ENCODE measurements at regions of chr2 and their contacts with region 1.

Region 1: DNA sequence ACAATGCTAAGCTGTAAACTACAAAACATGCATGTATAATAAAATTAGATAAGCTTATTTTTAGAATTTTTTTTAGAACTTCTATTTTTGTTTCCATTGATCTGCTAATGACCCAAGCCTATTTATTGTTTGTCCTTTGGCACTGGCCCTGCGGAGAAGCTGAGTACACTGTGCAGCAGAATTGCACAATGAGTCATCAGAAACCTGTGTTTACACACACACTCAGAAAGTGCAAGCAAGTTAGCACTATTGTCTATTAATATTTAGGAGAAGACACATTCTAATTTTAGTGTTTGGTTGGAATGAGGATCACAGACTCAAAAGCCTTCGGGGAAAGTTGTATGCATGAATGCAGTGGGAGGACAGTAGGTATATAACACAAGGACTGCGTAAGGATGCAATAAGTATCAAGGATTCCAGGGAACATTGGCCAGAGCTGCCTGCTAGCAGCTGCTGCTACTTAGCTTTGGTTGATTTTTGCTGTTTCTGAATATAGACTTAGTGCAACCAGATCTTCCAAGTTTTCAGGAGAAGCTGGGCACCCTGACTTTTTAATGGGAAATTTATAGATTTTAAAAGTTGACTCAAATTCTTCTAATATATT is 128.2 kb downstream of the KCNH7 start:
- DNase-seq: no peak
- H3K4me3 ChIP-seq: no peak overlapping the region
- H3K27ac ChIP-seq: no peak overlapping the region
- H3K4me1 ChIP-seq: no peaks in the 10 kb centered on the region
- H3K27me3 ChIP-seq: no peaks in the 10 kb centered on the region
- CTCF ChIP-seq: no peak

Region 2: DNA sequence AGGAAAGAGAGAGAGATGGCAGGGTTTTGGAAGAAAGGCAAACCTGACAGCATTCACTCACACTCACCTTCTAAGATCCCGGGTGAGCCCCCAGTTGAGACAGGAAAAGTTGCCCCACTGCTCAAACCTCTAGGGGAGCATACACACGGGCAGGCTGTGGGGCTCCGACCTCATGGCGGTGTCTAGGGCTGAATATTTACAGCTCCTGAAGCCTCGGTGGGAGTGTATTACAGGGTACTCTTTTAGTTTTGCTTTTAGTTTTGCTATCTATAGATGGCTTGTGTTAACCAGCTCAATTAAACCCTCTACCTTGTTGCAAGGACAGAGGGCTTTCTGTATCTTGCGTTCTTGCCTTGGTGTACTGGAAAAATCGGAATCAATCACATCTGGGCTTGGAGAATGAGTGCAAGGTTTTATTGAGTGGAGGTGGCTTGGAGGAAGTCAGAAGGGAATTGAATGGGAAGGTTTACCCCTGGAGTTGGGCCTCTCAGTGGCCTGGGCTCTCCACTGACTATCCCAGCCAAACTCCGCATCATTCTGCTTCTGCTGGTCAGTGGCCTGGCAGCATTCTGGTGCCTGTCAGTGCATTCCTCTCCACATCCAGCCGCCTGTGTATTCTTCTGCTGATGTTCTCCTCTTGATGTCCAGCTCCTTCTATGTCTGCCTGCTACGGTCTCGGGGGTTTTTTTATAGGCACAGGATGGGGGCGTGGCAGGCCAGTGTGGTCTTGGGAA is 381.8 kb before region 1 on chr2:
- CTCF ChIA-PET with region 1: interaction called, 12 read pairs
- POLR2A ChIA-PET with region 1: no interaction called
- intact Hi-C with region 1: no loop called
- DNase-seq: no peak
- H3K4me3 ChIP-seq: no peak overlapping the region
- H3K27ac ChIP-seq: no peak overlapping the region
- H3K4me1 ChIP-seq: no peaks in the 10 kb centered on the region
- H3K27me3 ChIP-seq: no peaks in the 10 kb centered on the region
- CTCF ChIP-seq: no peak

Region 3: DNA sequence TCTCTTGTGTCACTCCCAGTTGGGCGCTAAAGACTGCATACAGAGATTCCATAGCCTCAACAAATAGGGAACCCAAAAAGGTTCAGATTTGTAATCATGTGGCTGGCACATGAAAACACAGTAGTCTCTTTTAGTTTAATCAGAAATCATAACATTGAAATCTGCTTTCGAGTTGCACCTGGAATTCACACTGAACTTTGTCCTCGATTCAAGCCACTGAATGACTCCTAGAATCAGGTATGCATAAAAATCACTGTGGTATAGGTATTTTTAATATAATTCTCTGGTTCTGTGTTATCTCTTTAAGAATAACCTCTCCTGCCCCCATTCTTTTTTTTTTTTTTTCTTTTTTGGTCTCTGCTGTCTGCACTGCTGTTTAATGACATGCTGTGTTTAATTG is 22.0 kb before region 1 on chr2:
- CTCF ChIA-PET with region 1: no interaction called
- POLR2A ChIA-PET with region 1: no interaction called
- intact Hi-C with region 1: no loop called
- DNase-seq: no peak
- H3K4me3 ChIP-seq: no peak overlapping the region
- H3K27ac ChIP-seq: no peak overlapping the region
- H3K4me1 ChIP-seq: no peaks in the 10 kb centered on the region
- H3K27me3 ChIP-seq: no peaks in the 10 kb centered on the region
- CTCF ChIP-seq: no peak

Measured in A673 (cell line).